ENCODE measurements at regions of chr7 and their contacts with region 1.

Region 1: GRCh38 chr7:55951637-55952351 is at the start of gene MRPS17:
- DNase-seq: peak; percentile 84
- ATAC-seq: peak; percentile 100
- H3K4me3 Mint-ChIP-seq: peak within 1 kb of the TSS; percentile 98
- H3K27ac Mint-ChIP-seq: peak within 1 kb of the TSS; percentile 94
- H3K4me1 Mint-ChIP-seq: peaks cover 18% of the 10 kb centered on the region
- H3K27me3 Mint-ChIP-seq: peaks cover 2% of the 10 kb centered on the region
- CTCF ChIP-seq: no peak
- total RNA-seq, gene MRPS17: 16.9 and 20.6 TPM in 2 replicates

Region 2: DNA sequence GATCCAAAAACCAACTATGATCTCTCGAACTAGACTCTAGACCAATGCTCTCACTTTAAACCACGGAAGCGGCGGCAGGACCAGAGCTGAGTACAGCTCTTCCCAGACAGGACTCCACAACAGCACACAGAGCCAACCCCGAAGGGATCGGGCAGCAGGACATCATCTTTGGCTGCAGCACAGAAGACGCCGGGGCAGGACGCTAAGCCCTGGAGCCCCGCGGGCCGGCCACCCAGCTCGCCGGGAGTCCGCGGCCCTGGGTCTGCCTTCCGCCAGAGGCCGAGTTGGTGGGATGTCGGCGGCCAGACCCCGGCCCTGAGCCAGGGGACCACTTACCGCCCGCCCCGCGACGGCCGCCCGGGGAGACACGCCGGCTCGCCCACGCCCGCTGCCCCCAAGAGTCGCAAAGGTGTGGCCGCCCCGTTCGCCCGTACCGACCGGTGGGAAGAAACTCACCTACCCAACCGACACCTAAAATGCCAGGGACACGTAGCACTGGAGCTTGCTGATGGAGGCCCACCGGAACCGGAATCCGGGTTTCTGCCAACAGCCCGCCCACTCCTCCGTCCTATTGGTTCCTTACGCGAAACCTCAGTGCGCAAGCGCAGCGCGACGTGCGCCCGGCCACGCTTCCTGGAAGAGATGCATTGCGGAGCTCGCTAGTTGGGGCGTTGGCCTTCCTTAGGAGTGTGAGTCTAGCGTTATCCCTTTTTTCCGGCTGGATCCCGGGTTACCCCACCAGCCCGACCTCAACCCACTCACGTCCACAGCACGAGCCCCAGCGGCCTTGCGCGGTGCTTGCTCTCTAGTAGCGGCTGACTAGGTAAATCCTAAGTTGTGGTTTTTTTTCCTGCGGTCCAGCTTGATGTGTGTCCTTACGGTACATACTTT is 1192.8 kb before region 1 on chr7 and contains the start of gene SEC61G:
- CTCF ChIA-PET with region 1: no interaction called
- POLR2A ChIA-PET with region 1: no interaction called
- intact Hi-C with region 1: loop called (anchors 5 kb)
- DNase-seq: peak; percentile 89
- ATAC-seq: peak; percentile 95
- H3K4me3 Mint-ChIP-seq: peak within 1 kb of the TSS; percentile 98
- H3K27ac Mint-ChIP-seq: peak within 1 kb of the TSS; percentile 92
- H3K4me1 Mint-ChIP-seq: peaks cover 21% of the 10 kb centered on the region
- H3K27me3 Mint-ChIP-seq: no peaks in the 10 kb centered on the region
- CTCF ChIP-seq: no peak
- total RNA-seq, gene SEC61G: 57.3 and 65.8 TPM in 2 replicates

Region 3: DNA sequence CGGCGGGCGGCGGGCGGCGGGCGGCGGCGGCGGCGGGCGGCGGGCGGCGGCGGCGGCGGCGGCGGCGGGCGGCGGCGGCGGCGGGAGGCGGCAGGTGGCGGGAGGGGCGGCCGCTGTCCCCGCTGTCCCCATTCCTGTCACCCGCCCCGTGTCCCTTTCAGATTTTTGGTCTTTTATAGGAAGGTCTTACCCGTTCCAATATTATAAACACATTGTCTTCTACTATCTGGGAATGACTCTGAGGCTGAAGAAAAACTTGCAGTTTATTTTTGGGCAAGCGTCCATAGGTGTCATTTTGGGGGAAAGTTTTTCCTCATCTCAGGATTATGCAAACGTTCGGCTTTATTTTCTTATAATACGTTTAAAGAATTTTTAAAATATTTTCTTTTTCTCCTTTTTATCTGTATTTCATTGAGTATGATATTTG is 64.0 kb before region 1 on chr7:
- CTCF ChIA-PET with region 1: no interaction called
- POLR2A ChIA-PET with region 1: no interaction called
- intact Hi-C with region 1: loop called (anchors 1 kb)
- DNase-seq: no peak
- ATAC-seq: no peak
- H3K4me3 Mint-ChIP-seq: peak overlapping the region; percentile 78
- H3K27ac Mint-ChIP-seq: peak overlapping the region; percentile 60
- H3K4me1 Mint-ChIP-seq: peaks cover 4% of the 10 kb centered on the region
- H3K27me3 Mint-ChIP-seq: no peaks in the 10 kb centered on the region
- CTCF ChIP-seq: no peak

Region 4: GRCh38 chr7:55964261-55965099 is 12.7 kb after region 1 on chr7 and contains the start of gene NIPSNAP2:
- CTCF ChIA-PET with region 1: interaction called, 4 read pairs
- POLR2A ChIA-PET with region 1: interaction called, 5 read pairs
- intact Hi-C with region 1: loop called (anchors 1 kb)
- DNase-seq: peak; percentile 79
- ATAC-seq: peak; percentile 88
- H3K4me3 Mint-ChIP-seq: peak within 1 kb of the TSS; percentile 86
- H3K27ac Mint-ChIP-seq: peak within 1 kb of the TSS; percentile 88
- H3K4me1 Mint-ChIP-seq: peaks cover 25% of the 10 kb centered on the region
- H3K27me3 Mint-ChIP-seq: no peaks in the 10 kb centered on the region
- CTCF ChIP-seq: no peak
- total RNA-seq, gene NIPSNAP2: 33.7 and 43.8 TPM in 2 replicates

Region 5: DNA sequence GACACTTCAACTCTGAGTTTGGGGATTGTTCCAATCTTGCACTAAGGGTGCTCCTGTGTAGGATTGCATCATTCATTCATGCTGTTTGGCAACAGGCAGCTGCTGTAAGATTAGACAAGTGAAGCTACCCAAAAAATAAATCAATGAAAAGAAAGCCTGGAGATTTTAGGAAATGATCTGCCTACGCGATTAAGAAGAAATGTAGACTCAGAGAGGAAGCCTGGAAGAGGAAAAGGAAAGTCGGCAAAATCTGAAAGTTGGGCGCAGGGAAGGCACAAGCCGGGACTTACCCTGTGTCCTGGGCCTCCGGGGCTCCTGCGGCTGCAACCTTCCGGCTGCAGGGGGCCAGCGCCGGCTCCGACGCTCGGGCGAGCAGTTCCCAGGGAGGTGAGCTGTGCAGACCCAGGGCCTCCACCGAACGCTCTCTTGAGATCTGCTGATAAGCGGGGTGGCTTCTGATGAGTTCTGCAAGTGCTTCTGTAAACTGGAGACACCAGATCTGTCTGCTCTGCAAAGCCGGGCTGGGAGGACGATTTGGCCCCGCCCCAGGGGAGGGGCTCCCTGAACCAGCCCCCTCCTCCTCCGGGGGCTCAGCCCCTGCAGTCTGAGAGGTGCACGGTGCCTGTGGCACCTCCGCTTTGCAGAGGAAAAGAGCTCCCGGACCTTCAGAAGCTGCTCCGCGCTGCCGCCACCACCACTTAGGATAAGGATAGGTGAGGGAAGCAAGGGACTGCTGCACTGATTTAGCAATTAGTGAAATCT is 82.1 kb after region 1 on chr7:
- CTCF ChIA-PET with region 1: no interaction called
- POLR2A ChIA-PET with region 1: no interaction called
- intact Hi-C with region 1: loop called (anchors 5 kb)
- DNase-seq: peak; percentile 66
- ATAC-seq: peak; percentile 98
- H3K4me3 Mint-ChIP-seq: peak overlapping the region; percentile 84
- H3K27ac Mint-ChIP-seq: peak overlapping the region; percentile 68
- H3K4me1 Mint-ChIP-seq: peaks cover 4% of the 10 kb centered on the region
- H3K27me3 Mint-ChIP-seq: no peaks in the 10 kb centered on the region
- CTCF ChIP-seq: no peak